HEK293T (cell line): ENCODE measurements at regions of chr4 and their contacts with region 1.

Region 1: DNA sequence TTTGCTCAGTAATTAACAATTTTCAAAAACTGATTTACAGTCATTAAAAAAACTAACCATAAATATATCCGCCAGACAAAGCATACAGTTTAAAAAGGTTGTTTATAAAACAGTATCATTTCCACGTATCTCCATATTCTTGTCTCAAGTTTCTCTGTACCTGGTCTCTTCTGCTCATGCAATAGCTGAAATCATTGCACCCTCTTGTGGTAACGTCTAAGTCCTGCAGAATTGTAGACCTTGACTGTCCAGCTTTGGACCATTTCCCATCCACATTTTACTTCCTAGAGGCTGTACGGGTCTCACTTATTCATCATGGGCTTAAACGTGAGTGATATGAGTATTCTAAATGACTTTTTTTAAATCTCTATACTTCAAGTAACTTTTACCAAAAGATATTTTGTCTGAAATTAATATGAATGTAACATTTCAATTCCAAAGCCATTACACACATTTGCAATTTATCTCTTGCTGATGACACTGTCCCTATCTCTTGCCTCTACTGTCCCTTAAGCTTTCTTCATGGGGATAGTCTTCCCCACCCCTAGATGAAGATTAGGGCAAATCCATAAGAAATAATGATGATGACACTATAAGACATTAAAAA is 118.5 kb downstream of the BTC start:
- DNase-seq: peak; percentile 65

Region 2: DNA sequence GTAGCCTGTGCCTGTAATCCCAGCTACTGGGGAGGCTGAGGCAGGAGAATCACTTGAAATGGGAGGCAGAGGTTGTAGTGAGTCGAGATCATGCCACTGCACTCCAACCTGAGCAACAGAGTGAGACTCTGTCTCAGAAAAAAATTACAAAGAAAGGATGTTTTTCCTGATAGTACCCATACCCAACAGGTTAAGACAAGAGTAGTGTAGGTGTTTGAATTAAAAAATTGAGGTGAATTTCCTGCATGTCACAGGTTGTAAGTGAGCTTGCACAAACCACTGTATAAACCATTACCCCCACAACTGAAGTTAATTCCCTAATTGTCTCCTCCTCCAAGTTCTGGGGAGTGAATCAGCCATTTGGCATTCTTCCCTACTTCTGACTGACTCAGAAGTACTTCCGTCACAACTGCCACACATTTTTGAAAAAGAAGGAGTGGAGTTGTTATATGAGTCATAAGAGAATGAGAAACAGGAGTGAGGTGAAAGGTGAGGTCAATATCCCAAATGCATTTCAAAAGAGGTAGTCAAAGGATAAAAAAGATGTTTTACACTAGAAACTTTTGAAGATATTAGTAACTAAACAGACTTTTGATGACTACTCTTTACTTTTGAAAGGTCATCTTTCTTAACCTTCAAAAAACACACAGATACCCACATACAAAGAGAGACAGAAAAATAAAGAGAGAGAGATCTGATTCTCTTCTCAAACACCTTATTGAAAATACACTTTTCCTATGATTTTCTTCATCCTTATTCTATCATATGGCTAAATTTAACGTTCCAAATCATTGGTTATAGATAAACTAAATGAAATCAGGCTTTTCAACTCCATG is 16.0 kb before region 1 on chr4:
- CTCF ChIA-PET with region 1: no interaction called
- POLR2A ChIA-PET with region 1: no interaction called
- DNase-seq: no peak

Region 3: DNA sequence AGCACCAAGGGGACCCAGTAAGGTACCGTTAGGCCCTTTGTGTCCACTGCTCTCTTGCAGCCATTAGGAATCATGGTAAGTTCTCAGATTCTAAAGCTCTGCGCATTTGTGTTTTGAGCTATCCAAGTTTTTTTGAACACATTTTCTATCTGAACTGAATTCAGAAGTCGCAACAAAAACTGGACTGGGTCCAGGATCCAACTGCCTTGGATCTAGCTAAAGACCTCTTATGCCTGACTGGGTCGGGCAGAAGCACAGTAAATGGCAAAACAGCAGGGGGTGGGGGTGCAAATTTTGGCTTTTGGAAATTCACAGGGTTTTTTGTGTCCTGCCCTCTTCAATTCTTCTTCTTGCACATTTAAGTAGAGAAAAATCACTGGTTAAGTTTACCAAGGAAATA is 808.4 kb after region 1 on chr4:
- CTCF ChIA-PET with region 1: interaction called, 11 read pairs
- POLR2A ChIA-PET with region 1: no interaction called
- DNase-seq: no peak